Activated CD4-positive, alpha-beta memory T cell treated with anti-CD3 and anti-CD28 coated beads for 36 hours (primary cell): ENCODE measurements at regions of chr5 and their contacts with region 1.

Region 1: GRCh38 chr5:141564216-141564692 is 54.5 kb downstream of the DIAPH1 start:
- DNase-seq: peak; percentile 67
- H3K4me3 Mint-ChIP-seq: no peak overlapping the region
- H3K27ac Mint-ChIP-seq: peak overlapping the region; percentile 70
- H3K4me1 Mint-ChIP-seq: peaks cover 34% of the 10 kb centered on the region
- H3K27me3 Mint-ChIP-seq: no peaks in the 10 kb centered on the region

Region 2: GRCh38 chr5:141369994-141370848 is 194.0 kb before region 1 on chr5 and contains the start of gene PCDHGB3:
- CTCF ChIA-PET with region 1: interaction called, 17 read pairs
- POLR2A ChIA-PET with region 1: interaction called, 3 read pairs
- intact Hi-C with region 1: no loop called
- DNase-seq: peak; percentile 55
- H3K4me3 Mint-ChIP-seq: peak within 1 kb of the TSS; percentile 68
- H3K27ac Mint-ChIP-seq: no peak within 1 kb of the TSS
- H3K4me1 Mint-ChIP-seq: peaks cover 5% of the 10 kb centered on the region
- H3K27me3 Mint-ChIP-seq: peaks cover 48% of the 10 kb centered on the region
- total RNA-seq, gene PCDHGB3: 0.10 TPM in 1 of 2 experiments, not detected in the other

Region 3: DNA sequence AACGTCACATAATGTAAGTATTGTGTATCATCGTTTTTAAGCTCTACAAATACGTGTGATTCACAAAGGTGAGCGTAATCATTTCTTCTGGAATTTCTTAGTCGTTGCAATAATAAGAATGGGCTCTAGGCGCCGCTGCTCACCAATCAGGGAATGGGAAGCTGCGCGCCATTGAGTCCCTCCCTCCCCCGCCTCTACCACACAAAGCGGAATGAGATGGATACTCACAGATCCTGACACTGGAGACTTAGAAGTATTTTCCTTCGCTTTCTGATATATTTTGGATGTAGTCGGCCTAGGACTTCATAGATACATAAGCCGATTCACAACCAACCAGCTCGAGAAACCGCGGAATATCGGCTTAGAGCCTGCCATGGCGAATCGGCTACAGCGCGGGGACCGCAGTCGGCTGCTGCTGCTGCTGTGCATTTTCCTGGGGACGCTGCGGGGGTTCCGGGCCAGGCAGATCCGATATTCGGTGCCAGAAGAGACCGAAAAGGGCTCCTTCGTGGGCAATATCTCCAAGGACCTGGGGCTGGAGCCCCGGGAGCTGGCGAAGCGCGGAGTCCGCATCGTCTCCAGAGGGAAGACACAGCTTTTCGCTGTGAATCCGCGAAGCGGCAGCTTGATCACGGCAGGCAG is 143.3 kb before region 1 on chr5 and contains the start of gene PCDHGA11:
- CTCF ChIA-PET with region 1: interaction called, 19 read pairs
- POLR2A ChIA-PET with region 1: no interaction called
- intact Hi-C with region 1: loop called (anchors 1 kb)
- DNase-seq: peak; percentile 66
- H3K4me3 Mint-ChIP-seq: peak within 1 kb of the TSS; percentile 72
- H3K27ac Mint-ChIP-seq: no peak within 1 kb of the TSS
- H3K4me1 Mint-ChIP-seq: peaks cover 4% of the 10 kb centered on the region
- H3K27me3 Mint-ChIP-seq: peaks cover 68% of the 10 kb centered on the region
- total RNA-seq, gene PCDHGA11: 0.05 TPM in 1 of 2 experiments, not detected in the other

Region 4: GRCh38 chr5:141524604-141525597 is 39.4 kb before region 1 on chr5:
- CTCF ChIA-PET with region 1: interaction called, 34 read pairs
- POLR2A ChIA-PET with region 1: no interaction called
- intact Hi-C with region 1: loop called (anchors 2 kb)
- DNase-seq: peak; percentile 60
- H3K4me3 Mint-ChIP-seq: no peak overlapping the region
- H3K27ac Mint-ChIP-seq: peak overlapping the region; percentile 15
- H3K4me1 Mint-ChIP-seq: peaks cover 36% of the 10 kb centered on the region
- H3K27me3 Mint-ChIP-seq: no peaks in the 10 kb centered on the region

Region 5: DNA sequence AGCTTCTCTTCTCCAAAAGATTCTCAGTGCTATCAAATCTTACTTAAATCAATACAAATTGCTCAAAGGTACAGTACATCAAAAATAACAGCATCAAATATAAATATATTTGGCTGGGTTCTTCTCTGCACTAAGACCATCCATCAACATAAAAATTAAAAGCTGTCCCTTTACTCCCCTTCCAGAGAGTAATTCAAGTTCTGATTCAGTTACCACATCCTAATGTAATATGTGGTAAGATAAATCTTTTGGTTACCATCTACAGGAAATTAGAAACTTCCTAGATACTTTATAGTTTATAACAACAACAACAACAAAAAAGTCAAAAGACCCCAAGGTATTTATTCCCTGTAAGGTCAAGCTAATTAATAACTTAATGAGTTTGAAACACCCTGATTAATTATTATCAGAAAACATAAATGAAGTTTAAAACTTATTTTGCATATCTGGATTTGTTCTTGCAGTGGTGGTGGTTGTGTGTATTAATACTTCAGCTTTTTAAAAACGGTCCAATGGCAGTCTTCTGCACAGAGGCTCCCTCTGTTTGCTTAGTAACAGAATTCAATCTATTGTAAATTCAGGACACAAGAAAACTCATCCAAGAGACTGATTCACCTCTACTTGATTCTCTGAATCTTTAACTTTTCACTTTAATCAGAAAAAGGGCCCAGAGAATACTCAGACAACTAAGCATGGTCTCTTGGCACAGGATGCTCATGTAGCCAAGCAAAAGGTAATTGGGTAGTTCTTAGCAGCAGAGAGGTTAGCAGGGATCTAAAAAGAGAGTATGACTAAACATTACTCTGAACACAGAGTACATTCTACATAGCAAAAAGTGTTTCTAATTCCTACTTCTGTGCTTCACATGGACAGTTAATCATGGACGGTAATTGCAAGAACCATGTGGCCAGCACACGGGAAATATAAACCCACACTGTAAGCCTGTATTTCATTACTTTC is 34.4 kb after region 1 on chr5:
- CTCF ChIA-PET with region 1: interaction called, 25 read pairs
- POLR2A ChIA-PET with region 1: no interaction called
- intact Hi-C with region 1: no loop called
- DNase-seq: no peak
- H3K4me3 Mint-ChIP-seq: no peak overlapping the region
- H3K27ac Mint-ChIP-seq: peak overlapping the region; percentile 84
- H3K4me1 Mint-ChIP-seq: peaks cover 73% of the 10 kb centered on the region
- H3K27me3 Mint-ChIP-seq: no peaks in the 10 kb centered on the region

Region 6: GRCh38 chr5:141636413-141637122 is 72.3 kb after region 1 on chr5 and contains the starts of genes HDAC3 and RELL2:
- CTCF ChIA-PET with region 1: interaction called, 30 read pairs
- POLR2A ChIA-PET with region 1: interaction called, 5 read pairs
- intact Hi-C with region 1: no loop called
- DNase-seq: peak; percentile 96
- H3K4me3 Mint-ChIP-seq: peak within 1 kb of the TSS; percentile 94
- H3K27ac Mint-ChIP-seq: peak within 1 kb of the TSS; percentile 80
- H3K4me1 Mint-ChIP-seq: peaks cover 47% of the 10 kb centered on the region
- H3K27me3 Mint-ChIP-seq: no peaks in the 10 kb centered on the region
- total RNA-seq, gene HDAC3: 65.2 to 71.5 TPM
- total RNA-seq, gene RELL2: 17.8 to 17.9 TPM